K562 (cell line): ENCODE measurements at regions of chr6 and their contacts with region 1.

Region 1: GRCh38 chr6:155248008-155249001 is 15.5 kb upstream of the CLDN20 start:
- DNase-seq: peak in 3 of 4 experiments; percentile 22 to 47 (median 33)
- ATAC-seq: peak; percentile 68
- H3K4me3 ChIP-seq: no peak overlapping the region
- H3K27ac ChIP-seq: no peak overlapping the region
- H3K4me1 ChIP-seq: no peaks in the 10 kb centered on the region; a peak in 1 of 5 replicates
- H3K27me3 ChIP-seq: 0 out of 5 replicates have a peak, but pooled peaks cover 0 to under 1% of the 10 kb centered on the region in 2 experiments
- CTCF ChIP-seq: peak; percentile 53
- EP300 ChIP-seq: no peak
- POLR2A ChIP-seq: no peak
- RAD21 ChIP-seq: peak in 1 of 2 experiments; percentile 42; a peak in 1 of 4 replicates

Region 2: DNA sequence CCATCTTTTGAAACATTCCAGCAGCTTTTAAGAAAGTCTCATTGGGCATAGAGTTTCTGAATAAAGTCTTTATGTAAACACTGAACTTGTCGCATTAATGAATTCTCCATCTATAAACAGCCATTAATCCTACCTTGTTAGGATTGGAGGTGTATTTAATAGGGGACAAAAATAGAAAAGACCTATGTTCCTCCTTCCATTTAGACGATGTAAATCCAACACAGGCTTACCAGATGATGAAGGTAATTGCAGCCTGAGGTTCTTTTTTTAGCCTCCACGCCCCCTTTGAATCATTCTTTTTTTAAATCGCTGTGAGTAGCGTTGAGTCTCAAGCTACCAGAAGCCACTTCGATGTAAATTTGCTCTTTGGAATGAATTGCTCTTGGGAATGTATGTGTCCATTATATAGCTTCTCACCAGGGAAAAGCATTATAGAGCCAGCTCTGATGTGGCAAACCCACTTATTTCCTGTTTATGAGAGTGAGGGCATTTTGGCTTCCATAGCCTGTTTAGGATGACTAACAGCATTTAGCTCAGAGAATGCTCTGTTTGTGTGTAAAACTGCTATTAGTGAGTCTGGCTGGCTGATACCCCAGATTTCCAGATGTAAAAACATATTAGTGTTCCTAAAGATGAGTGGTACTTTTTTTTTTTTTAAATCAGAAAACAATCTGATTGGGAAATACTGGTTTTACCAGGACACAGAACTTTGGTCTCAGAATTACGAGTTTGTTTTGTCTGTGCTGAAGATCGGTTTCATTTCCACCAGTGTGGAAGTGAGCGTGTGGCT is 59.4 kb before region 1 on chr6:
- CTCF ChIA-PET with region 1: interaction called, 3 read pairs
- POLR2A ChIA-PET with region 1: no interaction called
- in situ Hi-C with region 1: no loop called
- intact Hi-C with region 1: loop called (anchors 5 kb)
- DNase-seq: no peak
- ATAC-seq: no peak
- H3K4me3 ChIP-seq: no peak overlapping the region
- H3K27ac ChIP-seq: no peak overlapping the region
- H3K4me1 ChIP-seq: no peaks in the 10 kb centered on the region; a peak in 1 of 5 replicates
- H3K27me3 ChIP-seq: peaks cover 38 to 51% of the 10 kb centered on the region in 2 experiments
- CTCF ChIP-seq: no peak
- EP300 ChIP-seq: no peak
- POLR2A ChIP-seq: no peak
- RAD21 ChIP-seq: no peak